Activated B cell treated with CpG ODN at 0.5 μM for 24 hours (primary cell): ENCODE measurements at regions of chr1 and their contacts with region 1.

Region 1: DNA sequence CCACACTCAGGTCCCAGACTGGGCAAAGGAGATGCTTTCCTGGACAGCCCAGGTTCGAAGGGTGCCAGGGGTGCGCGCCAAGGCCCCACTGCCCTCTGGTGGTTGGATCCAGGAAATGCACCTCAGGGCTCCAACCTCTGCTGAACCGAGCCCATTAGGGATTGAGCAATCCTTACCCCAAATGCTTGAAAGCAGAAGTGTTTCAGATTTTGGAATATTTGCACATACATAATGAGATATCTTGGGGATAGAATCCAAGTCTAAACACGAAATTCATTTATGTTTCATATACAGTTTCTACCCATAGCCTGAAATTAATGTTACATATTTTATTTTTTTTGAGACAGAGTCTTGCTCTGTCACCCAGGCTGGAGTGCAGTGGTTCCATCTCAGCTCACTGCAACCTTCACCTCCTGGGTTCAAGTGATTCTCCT is 57.4 kb downstream of the SLC9A1 start:
- DNase-seq: peak; percentile 61
- ATAC-seq: peak; percentile 40
- H3K4me3 Mint-ChIP-seq: no peak overlapping the region
- H3K27ac Mint-ChIP-seq: no peak overlapping the region
- H3K4me1 Mint-ChIP-seq: peaks cover 22% of the 10 kb centered on the region
- H3K27me3 Mint-ChIP-seq: no peaks in the 10 kb centered on the region
- CTCF ChIP-seq: peak; percentile 72

Region 2: DNA sequence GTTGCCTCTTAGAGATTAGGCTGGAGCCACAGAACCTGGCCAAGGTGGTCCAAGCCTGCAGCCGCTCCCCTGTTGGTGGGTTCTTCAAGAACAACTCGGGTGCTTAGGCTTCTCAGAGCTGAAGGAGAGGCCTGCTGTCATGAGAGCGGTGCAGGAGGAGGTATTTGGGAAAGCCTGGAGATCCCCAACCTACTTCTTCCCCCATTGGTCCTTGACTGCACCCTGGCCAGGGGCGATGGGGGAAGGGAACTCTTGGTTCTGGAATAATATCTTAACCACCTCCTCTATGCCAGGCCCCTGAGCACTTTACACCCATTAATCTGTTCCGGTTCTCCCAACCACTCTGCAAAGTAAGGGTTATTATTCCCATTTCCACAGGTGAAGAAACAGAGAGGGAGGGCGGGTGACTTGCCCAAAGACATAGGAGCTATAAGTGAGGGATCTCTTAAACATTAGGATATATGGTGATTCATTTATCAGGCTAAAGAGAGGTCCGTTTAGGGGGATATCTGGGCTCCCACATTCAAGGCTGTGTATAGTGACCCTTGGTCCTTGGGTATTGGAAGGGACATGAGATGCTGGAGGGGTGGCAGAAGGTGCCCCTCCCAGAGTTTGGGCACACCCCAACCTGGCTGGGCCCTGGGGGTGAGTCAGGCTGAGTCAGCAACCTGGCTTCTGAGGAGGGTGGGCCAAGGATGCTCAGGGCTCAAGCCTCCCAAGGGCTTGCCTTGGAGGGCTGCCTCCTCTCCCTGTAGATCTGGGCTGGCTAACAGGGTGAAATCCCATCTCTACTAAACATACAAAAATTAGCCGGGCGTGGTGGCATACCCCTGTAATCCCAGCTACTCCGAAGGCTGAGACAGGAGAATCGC is 98.8 kb before region 1 on chr1:
- CTCF ChIA-PET with region 1: interaction called, 15 read pairs
- POLR2A ChIA-PET with region 1: interaction called, 3 read pairs
- intact Hi-C with region 1: loop called (anchors 1 kb)
- DNase-seq: no peak
- ATAC-seq: no peak
- H3K4me3 Mint-ChIP-seq: no peak overlapping the region
- H3K27ac Mint-ChIP-seq: no peak overlapping the region
- H3K4me1 Mint-ChIP-seq: peaks cover 36% of the 10 kb centered on the region
- H3K27me3 Mint-ChIP-seq: peaks cover 16% of the 10 kb centered on the region
- CTCF ChIP-seq: no peak